ENCODE measurements at regions of chrX and their contacts with region 1.

Region 1: DNA sequence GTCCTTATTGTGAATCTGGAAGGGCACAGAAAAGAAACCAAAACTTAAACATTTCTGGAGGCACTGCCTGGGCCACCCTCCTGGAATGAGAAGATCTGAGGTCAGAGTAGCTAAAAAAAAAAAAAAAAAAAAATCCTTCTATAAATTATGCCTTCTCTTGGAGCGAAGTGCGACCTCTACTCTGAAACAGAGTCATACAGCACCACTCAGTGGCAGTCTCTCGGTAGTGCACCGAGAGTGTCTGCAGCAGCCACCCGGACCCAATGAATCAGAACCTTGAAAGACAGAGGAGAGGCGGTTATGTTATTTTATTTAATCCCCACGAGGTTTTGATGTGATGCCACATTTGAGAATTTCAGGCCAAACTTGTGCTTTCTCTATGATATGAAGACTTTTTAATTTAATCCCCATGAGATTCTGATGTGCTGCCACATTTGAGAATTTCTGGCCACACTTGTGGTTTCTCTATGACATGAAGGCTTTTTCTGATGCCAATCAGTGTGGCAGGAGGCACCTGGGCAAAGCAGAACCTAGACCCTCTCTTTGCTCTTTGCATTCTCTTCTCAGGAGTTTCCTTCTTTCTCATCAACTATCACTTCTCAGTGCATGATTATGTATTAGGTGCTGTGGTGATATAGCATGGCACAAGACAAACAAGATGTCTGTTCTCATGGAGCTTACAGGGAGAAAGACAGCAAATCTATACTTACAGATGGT is 5.6 kb upstream of the CT47C1 start:
- DNase-seq: peak; percentile 45 to 46
- ATAC-seq: peak in 6 of 8 donors; percentile 34 to 81 (median 72)
- H3K4me3 ChIP-seq: no peak overlapping the region
- H3K27ac ChIP-seq: no peak overlapping the region
- H3K4me1 ChIP-seq: peaks cover 0 to 9% (median 0%) of the 10 kb centered on the region in 9 donors
- H3K27me3 ChIP-seq: peaks cover 0 to 34% (median 0%) of the 10 kb centered on the region in 7 donors
- CTCF ChIP-seq: peak; percentile 22 to 72 (median 65)

Region 2: DNA sequence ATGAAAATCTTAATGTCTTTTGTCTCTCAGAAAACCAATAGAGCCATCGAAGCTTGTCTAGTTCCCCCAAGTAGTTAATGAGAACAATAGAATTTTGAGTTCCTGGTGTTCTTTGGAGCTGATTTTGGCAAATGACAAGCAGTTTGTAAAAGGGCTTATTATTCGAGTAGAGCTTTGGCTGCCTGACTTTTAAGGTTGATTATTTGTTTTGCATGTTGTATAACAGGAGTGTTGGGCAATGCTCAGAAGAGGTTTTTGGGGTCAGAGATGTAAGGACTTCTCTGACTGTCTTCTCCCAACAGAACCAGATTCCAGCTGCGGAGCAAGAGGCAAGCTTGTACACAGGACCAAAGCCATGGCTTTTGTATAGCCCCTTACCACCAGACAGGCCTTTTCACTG is 213.6 kb before region 1 on chrX:
- intact Hi-C with region 1: loop called in 6 of 10 experiments (anchors 2 to 5 kb)
- DNase-seq: no peak
- ATAC-seq: no peak
- H3K4me3 ChIP-seq: no peak overlapping the region
- H3K27ac ChIP-seq: no peak overlapping the region
- H3K4me1 ChIP-seq: no peaks in the 10 kb centered on the region
- H3K27me3 ChIP-seq: peaks cover 0 to 16% (median 0%) of the 10 kb centered on the region in 7 donors
- CTCF ChIP-seq: no peak

Region 3: GRCh38 chrX:119004920-119005524 is 62.2 kb before region 1 on chrX:
- intact Hi-C with region 1: loop called (anchors 2 to 10 kb)
- DNase-seq: peak; percentile 13 to 55
- ATAC-seq: peak; percentile 38 to 83 (median 70)
- H3K4me3 ChIP-seq: no peak overlapping the region
- H3K27ac ChIP-seq: no peak overlapping the region
- H3K4me1 ChIP-seq: peaks cover 0 to 28% (median 0%) of the 10 kb centered on the region in 9 donors
- H3K27me3 ChIP-seq: peaks cover 0 to 19% (median 0%) of the 10 kb centered on the region in 7 donors
- CTCF ChIP-seq: peak; percentile 50 to 93 (median 77)

Region 4: GRCh38 chrX:119482481-119483480 is 415.6 kb after region 1 on chrX:
- intact Hi-C with region 1: no loop called
- DNase-seq: peak; percentile 53 to 71
- ATAC-seq: peak; percentile 73 to 94 (median 86)
- H3K4me3 ChIP-seq: peak overlapping the region in 9 of 10 donors; percentile 15 to 58 (median 51)
- H3K27ac ChIP-seq: peak overlapping the region; percentile 40 to 82 (median 73)
- H3K4me1 ChIP-seq: peaks cover 0 to 13% (median 5%) of the 10 kb centered on the region in 9 donors
- H3K27me3 ChIP-seq: no peaks in the 10 kb centered on the region
- CTCF ChIP-seq: peak; percentile 45 to 81 (median 69)